GM13976 (cell line): ENCODE measurements at regions of chr17 and their contacts with region 1.

Region 1: GRCh38 chr17:29807520-29808351 is 122.3 kb downstream of the SSH2 start:
- DNase-seq: peak; percentile 73
- CTCF ChIP-seq: peak; percentile 57

Region 2: GRCh38 chr17:29891131-29891530 is 83.4 kb after region 1 on chr17:
- in situ Hi-C with region 1: no loop called
- DNase-seq: no peak
- CTCF ChIP-seq: no peak

Region 3: GRCh38 chr17:29931231-29931932 is 123.6 kb after region 1 on chr17:
- in situ Hi-C with region 1: loop called (anchors 5 kb)
- DNase-seq: peak; percentile 63
- CTCF ChIP-seq: peak; percentile 70

Region 4: GRCh38 chr17:30084788-30085187 is 277.1 kb after region 1 on chr17:
- in situ Hi-C with region 1: loop called (anchors 10 kb)
- DNase-seq: no peak
- CTCF ChIP-seq: no peak

Region 5: GRCh38 chr17:30188211-30188939 is 380.6 kb after region 1 on chr17:
- in situ Hi-C with region 1: no loop called
- DNase-seq: no peak
- CTCF ChIP-seq: no peak